H1 (cell line): ENCODE measurements at regions of chr13 and their contacts with region 1.

Region 1: GRCh38 chr13:41456768-41457588 is at the start of gene RGCC:
- DNase-seq: peak in 1 of 2 experiments; percentile 81
- H3K4me3 ChIP-seq: peak within 1 kb of the TSS; percentile 33 to 75 (median 56)
- H3K27ac ChIP-seq: no peak within 1 kb of the TSS
- H3K4me1 ChIP-seq: peaks cover 0 to 4% (median 2%) of the 10 kb centered on the region in 4 experiments; a peak in 3 of 7 replicates
- H3K27me3 ChIP-seq: peaks cover 29 to 57% (median 48%) of the 10 kb centered on the region in 4 experiments
- CTCF ChIP-seq: no peak
- EP300 ChIP-seq: no peak
- POLR2A ChIP-seq: no peak
- RAD21 ChIP-seq: no peak
- total RNA-seq, gene RGCC: 0.41 and 0.46 TPM in 2 replicates

Region 2: GRCh38 chr13:41443966-41444365 is 13.0 kb before region 1 on chr13:
- CTCF ChIA-PET with region 1: no interaction called
- POLR2A ChIA-PET with region 1: no interaction called
- DNase-seq: no peak
- H3K4me3 ChIP-seq: no peak overlapping the region
- H3K27ac ChIP-seq: no peak overlapping the region
- H3K4me1 ChIP-seq: no peaks in the 10 kb centered on the region
- H3K27me3 ChIP-seq: no peaks in the 10 kb centered on the region
- CTCF ChIP-seq: no peak
- EP300 ChIP-seq: no peak
- POLR2A ChIP-seq: no peak
- RAD21 ChIP-seq: no peak

Region 3: GRCh38 chr13:41467425-41467945 is 10.5 kb after region 1 on chr13:
- CTCF ChIA-PET with region 1: interaction called, 31 read pairs
- POLR2A ChIA-PET with region 1: interaction called, 3 read pairs
- DNase-seq: no peak
- H3K4me3 ChIP-seq: no peak overlapping the region
- H3K27ac ChIP-seq: no peak overlapping the region
- H3K4me1 ChIP-seq: no peaks in the 10 kb centered on the region
- H3K27me3 ChIP-seq: no peaks in the 10 kb centered on the region
- CTCF ChIP-seq: no peak
- EP300 ChIP-seq: no peak
- POLR2A ChIP-seq: no peak
- RAD21 ChIP-seq: no peak

Region 4: GRCh38 chr13:41505297-41505741 is 48.3 kb after region 1 on chr13:
- CTCF ChIA-PET with region 1: no interaction called
- POLR2A ChIA-PET with region 1: no interaction called
- DNase-seq: no peak
- H3K4me3 ChIP-seq: no peak overlapping the region
- H3K27ac ChIP-seq: no peak overlapping the region
- H3K4me1 ChIP-seq: no peaks in the 10 kb centered on the region
- H3K27me3 ChIP-seq: no peaks in the 10 kb centered on the region
- CTCF ChIP-seq: no peak
- EP300 ChIP-seq: no peak
- POLR2A ChIP-seq: no peak
- RAD21 ChIP-seq: no peak

Region 5: DNA sequence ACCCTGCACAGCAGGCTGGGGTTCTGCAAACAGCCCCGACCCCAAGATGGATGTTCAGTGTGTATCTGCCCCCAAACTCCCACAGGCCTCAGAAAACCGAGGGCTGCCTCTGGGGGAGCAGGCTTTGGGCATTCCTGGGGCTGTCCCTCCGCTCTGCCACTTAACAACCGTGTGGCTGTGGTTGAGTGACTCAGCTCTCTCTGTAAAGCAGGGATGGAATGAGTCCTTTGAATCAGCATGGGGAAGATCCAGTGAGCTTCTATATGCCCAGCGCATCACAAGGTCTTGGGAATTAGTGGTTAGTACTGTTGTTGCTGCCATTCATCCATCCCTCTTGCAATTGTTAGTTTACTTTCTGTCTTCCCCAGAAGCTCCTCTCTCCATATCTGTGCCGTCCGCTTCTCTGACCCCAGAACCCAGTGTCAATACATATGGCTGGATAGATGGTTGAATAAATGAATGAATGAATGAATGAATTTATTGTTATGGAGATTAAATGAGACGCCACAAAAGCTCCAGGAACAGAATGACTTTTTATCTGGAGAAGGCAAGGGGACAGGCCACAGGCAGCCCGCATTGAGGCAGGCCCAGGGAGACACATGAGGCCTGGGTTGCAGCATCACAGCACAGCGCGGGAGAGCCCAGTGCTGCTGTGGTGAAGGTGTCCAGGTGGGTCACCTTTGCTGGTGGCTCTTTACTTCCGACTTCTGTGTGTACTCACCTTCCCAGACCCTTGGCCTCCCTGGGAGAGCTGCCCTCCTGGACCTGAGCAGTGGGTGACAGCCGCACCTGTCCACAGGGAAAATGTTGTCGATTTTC is 89.6 kb after region 1 on chr13:
- CTCF ChIA-PET with region 1: interaction called, 10 read pairs
- POLR2A ChIA-PET with region 1: no interaction called
- DNase-seq: no peak
- H3K4me3 ChIP-seq: no peak overlapping the region
- H3K27ac ChIP-seq: no peak overlapping the region
- H3K4me1 ChIP-seq: peaks cover 0 to 4% (median 2%) of the 10 kb centered on the region in 4 experiments; a peak in 3 of 7 replicates
- H3K27me3 ChIP-seq: no peaks in the 10 kb centered on the region; a peak in 1 of 7 replicates
- CTCF ChIP-seq: no peak
- EP300 ChIP-seq: no peak
- POLR2A ChIP-seq: no peak
- RAD21 ChIP-seq: no peak

Region 6: DNA sequence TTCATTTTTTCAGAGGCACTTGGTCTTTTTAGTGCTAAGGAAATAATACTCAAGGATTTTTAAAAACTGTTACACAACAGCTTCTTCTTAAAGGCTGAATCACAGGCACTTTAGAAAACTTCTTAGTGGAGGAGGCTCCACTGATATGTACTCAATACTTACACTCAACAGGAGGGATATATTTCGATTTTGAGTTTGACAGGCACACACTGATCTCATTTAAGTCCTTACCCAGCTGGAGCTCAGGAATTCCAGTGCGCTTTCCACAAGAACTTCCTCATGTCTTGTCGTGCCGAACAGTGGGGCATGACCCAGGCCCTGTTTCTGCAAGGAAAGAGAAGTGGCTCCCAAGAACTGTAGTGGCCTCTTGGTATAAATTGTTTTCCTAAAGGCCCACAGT is 104.2 kb after region 1 on chr13:
- CTCF ChIA-PET with region 1: interaction called, 10 read pairs
- POLR2A ChIA-PET with region 1: no interaction called
- DNase-seq: no peak
- H3K4me3 ChIP-seq: no peak overlapping the region
- H3K27ac ChIP-seq: no peak overlapping the region
- H3K4me1 ChIP-seq: peaks cover 0 to 4% (median 2%) of the 10 kb centered on the region in 4 experiments; a peak in 3 of 7 replicates
- H3K27me3 ChIP-seq: no peaks in the 10 kb centered on the region
- CTCF ChIP-seq: no peak
- EP300 ChIP-seq: no peak
- POLR2A ChIP-seq: no peak
- RAD21 ChIP-seq: no peak

Region 7: DNA sequence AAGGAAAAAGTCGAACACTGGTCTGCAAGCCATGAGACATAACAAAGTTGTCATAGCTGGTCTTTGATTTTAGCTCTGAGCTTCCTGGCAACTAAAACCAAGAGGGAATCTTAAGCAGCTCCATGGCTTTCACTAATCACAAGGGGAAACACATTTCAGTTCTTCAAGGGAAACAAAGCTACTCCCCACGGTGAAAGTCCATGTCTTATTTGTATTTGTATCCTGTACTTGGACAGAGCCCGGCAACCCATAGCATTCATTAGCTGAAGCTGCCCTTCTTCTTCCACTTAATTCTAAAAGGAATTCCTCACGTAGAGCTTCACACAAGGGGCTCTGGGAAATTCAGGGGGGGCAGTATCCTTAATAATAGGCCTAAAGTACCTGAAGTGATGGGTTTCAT is 129.2 kb after region 1 on chr13:
- CTCF ChIA-PET with region 1: interaction called, 14 read pairs
- POLR2A ChIA-PET with region 1: no interaction called
- DNase-seq: no peak
- H3K4me3 ChIP-seq: no peak overlapping the region
- H3K27ac ChIP-seq: no peak overlapping the region
- H3K4me1 ChIP-seq: peaks cover 0 to 3% (median 0%) of the 10 kb centered on the region in 4 experiments; a peak in 1 of 7 replicates
- H3K27me3 ChIP-seq: no peaks in the 10 kb centered on the region
- CTCF ChIP-seq: no peak
- EP300 ChIP-seq: no peak
- POLR2A ChIP-seq: no peak
- RAD21 ChIP-seq: no peak

Region 8: DNA sequence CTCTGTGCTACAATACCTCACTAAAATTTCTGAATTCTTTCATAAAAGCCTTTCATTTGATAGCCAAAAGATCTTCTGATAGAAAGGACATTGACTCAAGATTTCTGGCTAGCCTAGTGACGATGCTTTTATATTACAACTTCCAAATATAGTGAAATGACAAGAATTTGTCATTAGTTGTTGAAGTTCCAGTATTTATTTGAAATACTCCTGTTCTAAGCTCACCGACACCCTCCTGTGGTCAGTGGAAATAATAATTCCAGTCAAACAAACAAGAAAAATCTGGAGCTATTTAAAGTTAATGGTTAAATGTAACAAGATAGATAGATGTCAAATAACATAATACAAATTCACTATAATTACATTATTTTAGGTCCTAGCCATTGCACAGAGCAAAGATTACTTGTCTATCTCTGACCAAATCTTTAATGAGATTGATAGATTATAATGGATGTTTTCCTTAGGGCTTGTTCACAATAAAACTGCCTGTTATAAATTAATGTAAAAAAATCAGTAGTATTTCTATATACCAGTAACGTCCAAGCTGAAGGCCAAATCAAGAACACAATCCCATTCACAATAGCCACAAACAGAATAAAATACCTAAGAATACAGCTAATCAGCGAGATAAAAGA is 195.9 kb after region 1 on chr13:
- CTCF ChIA-PET with region 1: interaction called, 35 read pairs
- POLR2A ChIA-PET with region 1: no interaction called
- DNase-seq: no peak
- H3K4me3 ChIP-seq: no peak overlapping the region
- H3K27ac ChIP-seq: no peak overlapping the region
- H3K4me1 ChIP-seq: no peaks in the 10 kb centered on the region
- H3K27me3 ChIP-seq: no peaks in the 10 kb centered on the region
- CTCF ChIP-seq: peak in 2 of 3 experiments; percentile 24 to 31; a peak in 2 of 4 replicates
- EP300 ChIP-seq: no peak
- POLR2A ChIP-seq: no peak
- RAD21 ChIP-seq: peak; percentile 62 to 72